ENCODE measurements at regions of chr15 and their contacts with region 1.

Region 1: GRCh38 chr15:74402873-74403587 is 30.7 kb downstream of the SEMA7A start:
- DNase-seq: peak; percentile 37 to 63
- ATAC-seq: peak; percentile 57 to 67 (median 65)
- H3K4me3 ChIP-seq: no peak overlapping the region
- H3K4me3 Mint-ChIP-seq: peak overlapping the region; percentile 29
- H3K27ac ChIP-seq: peak overlapping the region; percentile 63
- H3K27ac Mint-ChIP-seq: peak overlapping the region; percentile 32 to 70
- H3K4me1 ChIP-seq: peaks cover 72% of the 10 kb centered on the region
- H3K4me1 Mint-ChIP-seq: peaks cover 62 to 78% of the 10 kb centered on the region in 2 donors
- H3K27me3 ChIP-seq: no peaks in the 10 kb centered on the region
- H3K27me3 Mint-ChIP-seq: no peaks in the 10 kb centered on the region
- CTCF ChIP-seq: no peak

Region 2: DNA sequence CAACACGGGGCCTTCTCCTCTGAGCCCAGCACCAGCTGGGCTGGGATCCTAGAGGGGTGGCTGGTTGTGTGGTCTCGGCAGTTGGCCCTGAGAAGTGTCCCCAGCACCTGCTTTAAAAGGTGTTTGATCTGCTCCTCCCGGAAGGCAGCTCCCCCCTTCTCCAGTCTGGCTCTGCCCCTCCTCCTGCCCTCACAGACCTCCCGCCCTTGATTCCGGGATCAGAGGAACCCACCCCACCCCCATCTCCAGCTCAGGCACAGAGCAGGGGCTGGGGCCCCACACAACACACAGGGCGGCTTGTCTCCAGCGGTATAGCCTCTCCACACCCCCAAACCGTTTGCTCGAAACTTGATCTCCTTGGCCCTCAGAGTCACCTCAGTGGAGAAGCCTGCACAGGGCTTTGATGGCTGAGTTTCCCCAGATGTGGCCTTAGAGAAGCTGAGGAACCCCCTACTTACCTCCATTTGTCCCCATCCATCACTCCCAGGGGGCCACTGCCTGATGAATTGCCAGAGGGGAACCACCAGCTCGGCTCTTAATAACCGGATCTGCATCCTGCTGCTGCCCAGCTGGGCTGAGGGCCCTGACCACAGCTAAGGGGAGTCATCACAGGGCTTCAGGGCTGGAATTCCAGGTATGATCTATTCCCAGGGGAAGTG is 194.0 kb before region 1 on chr15:
- intact Hi-C with region 1: no loop called
- DNase-seq: no peak
- ATAC-seq: no peak
- H3K4me3 ChIP-seq: no peak overlapping the region
- H3K4me3 Mint-ChIP-seq: no peak overlapping the region
- H3K27ac ChIP-seq: no peak overlapping the region
- H3K27ac Mint-ChIP-seq: no peak overlapping the region
- H3K4me1 ChIP-seq: no peaks in the 10 kb centered on the region
- H3K4me1 Mint-ChIP-seq: peaks cover 0 to 6% of the 10 kb centered on the region in 2 donors
- H3K27me3 ChIP-seq: no peaks in the 10 kb centered on the region
- H3K27me3 Mint-ChIP-seq: peaks cover 2 to 7% of the 10 kb centered on the region in 2 donors
- CTCF ChIP-seq: no peak

Region 3: GRCh38 chr15:74438721-74439316 is 35.8 kb after region 1 on chr15:
- intact Hi-C with region 1: loop called (anchors 5 kb)
- DNase-seq: peak; percentile 66 to 89
- ATAC-seq: peak; percentile 63 to 76 (median 75)
- H3K4me3 ChIP-seq: no peak overlapping the region
- H3K4me3 Mint-ChIP-seq: no peak overlapping the region
- H3K27ac ChIP-seq: no peak overlapping the region
- H3K27ac Mint-ChIP-seq: no peak overlapping the region
- H3K4me1 ChIP-seq: peaks cover 18% of the 10 kb centered on the region
- H3K4me1 Mint-ChIP-seq: peaks cover 0 to 20% of the 10 kb centered on the region in 2 donors
- H3K27me3 ChIP-seq: no peaks in the 10 kb centered on the region
- H3K27me3 Mint-ChIP-seq: no peaks in the 10 kb centered on the region
- CTCF ChIP-seq: peak; percentile 95

Region 4: DNA sequence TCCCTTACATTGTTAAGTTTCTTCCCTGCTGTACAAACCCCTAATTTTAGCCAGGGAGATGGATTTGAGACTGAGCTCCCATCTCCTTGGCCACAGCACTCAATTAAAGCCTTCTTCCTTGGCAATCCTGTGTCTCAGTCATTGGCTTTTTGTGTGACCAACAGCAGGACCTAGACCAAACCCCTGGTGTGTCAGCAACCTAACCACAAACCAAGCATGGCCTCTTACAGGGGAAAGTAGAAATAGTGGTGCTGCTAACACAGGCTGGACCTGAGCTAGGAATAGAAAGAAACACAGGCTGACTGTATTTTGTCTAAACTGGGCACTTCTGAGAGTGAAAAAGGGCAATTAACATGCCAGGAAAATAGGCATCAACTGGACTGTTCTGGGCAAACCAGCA is 658.2 kb after region 1 on chr15:
- intact Hi-C with region 1: no loop called
- DNase-seq: no peak
- ATAC-seq: peak; percentile 63 to 75 (median 64)
- H3K4me3 ChIP-seq: no peak overlapping the region
- H3K4me3 Mint-ChIP-seq: no peak overlapping the region
- H3K27ac ChIP-seq: no peak overlapping the region
- H3K27ac Mint-ChIP-seq: peak overlapping the region in 1 of 2 donors; percentile 75
- H3K4me1 ChIP-seq: peaks cover 30% of the 10 kb centered on the region
- H3K4me1 Mint-ChIP-seq: peaks cover 20 to 30% of the 10 kb centered on the region in 2 donors
- H3K27me3 ChIP-seq: no peaks in the 10 kb centered on the region
- H3K27me3 Mint-ChIP-seq: peaks cover 0 to 3% of the 10 kb centered on the region in 2 donors
- CTCF ChIP-seq: no peak

Measured in natural killer cell (primary cell).